Sigmoid colon (tissue), 7 donors: ENCODE measurements at regions of chr20 and their contacts with region 1.

Region 1: DNA sequence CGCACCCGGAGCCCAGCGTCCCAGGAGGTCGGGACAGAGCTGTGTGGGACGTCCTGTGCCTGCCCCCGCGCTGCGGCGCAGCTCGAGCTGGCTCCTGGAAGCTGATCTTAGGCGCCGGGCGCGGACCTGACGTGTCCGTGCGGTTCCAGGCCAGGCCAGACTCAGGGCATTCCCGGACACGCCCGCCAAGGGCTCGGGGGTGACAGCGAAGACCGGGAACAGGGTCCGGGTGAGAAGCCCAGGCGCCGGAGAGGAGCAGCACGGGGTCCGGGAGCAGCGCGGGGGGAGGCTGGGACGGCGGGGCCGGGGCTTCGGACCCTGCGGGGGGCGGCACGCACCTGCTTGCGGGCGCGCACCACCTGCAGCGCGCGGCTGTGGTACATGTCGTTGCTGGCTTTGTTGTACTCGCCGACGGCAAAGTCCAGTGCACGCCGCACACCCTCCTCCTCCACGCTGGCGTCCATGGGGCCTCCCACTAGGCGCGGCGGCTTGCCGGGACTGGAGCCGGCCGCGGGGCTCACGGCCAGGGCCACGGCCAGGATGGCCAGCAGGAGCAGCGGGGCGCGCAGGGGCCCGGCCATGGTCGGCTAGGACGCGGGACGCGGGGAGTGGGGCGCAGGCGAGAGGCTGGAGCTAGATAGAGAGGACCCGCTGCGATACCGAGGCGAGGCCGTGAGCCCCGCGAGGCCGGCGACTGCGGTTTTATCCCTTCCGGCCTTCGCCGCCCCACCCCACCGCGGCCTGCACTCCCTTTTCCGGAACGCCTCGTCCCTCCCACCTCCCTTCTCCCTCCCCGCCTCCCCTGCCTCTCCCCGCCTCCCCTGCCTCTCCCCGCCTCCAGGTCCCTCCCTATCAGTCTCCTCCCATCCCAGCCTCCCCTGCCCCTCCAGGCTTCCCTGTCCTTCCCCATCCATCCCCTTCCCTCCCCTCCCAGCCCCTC is at the start of gene CST3:
- DNase-seq: peak; percentile 97
- H3K4me3 ChIP-seq: peak within 1 kb of the TSS; percentile 73 to 96 (median 86)
- H3K27ac ChIP-seq: peak within 1 kb of the TSS; percentile 94 to 97 (median 96)
- H3K4me1 ChIP-seq: peaks cover 0 to 52% (median 43%) of the 10 kb centered on the region in 4 donors
- H3K27me3 ChIP-seq: no peaks in the 10 kb centered on the region
- CTCF ChIP-seq: no peak
- EP300 ChIP-seq: peak in 1 of 4 donors; percentile 58
- POLR2A ChIP-seq: peak; percentile 67 to 77
- total RNA-seq, gene CST3: 693 to 1,250 (median 1,143) TPM

Region 2: GRCh38 chr20:23361598-23362384 is 275.8 kb before region 1 on chr20 and contains the start of gene GZF1:
- intact Hi-C with region 1: loop called (anchors 5 kb)
- DNase-seq: peak; percentile 99
- H3K4me3 ChIP-seq: peak within 1 kb of the TSS; percentile 67 to 95 (median 83)
- H3K27ac ChIP-seq: peak within 1 kb of the TSS; percentile 97 to 100 (median 99)
- H3K4me1 ChIP-seq: peaks cover 0 to 55% (median 49%) of the 10 kb centered on the region in 4 donors
- H3K27me3 ChIP-seq: no peaks in the 10 kb centered on the region
- CTCF ChIP-seq: no peak
- EP300 ChIP-seq: peak in 2 of 4 donors; percentile 71 to 100
- POLR2A ChIP-seq: peak; percentile 97 to 98
- total RNA-seq, gene GZF1: 13.0 to 17.5 (median 17.1) TPM

Region 3: GRCh38 chr20:25042531-25043498 is 1405.3 kb after region 1 on chr20:
- intact Hi-C with region 1: loop called (anchors 10 kb)
- DNase-seq: peak; percentile 85
- H3K4me3 ChIP-seq: no peak overlapping the region
- H3K27ac ChIP-seq: peak overlapping the region; percentile 52 to 93 (median 88)
- H3K4me1 ChIP-seq: peaks cover 0 to 79% (median 62%) of the 10 kb centered on the region in 4 donors
- H3K27me3 ChIP-seq: no peaks in the 10 kb centered on the region
- CTCF ChIP-seq: no peak
- EP300 ChIP-seq: no peak
- POLR2A ChIP-seq: no peak